OCI-LY7 (cell line): ENCODE measurements at regions of chr20 and their contacts with region 1.

Region 1: DNA sequence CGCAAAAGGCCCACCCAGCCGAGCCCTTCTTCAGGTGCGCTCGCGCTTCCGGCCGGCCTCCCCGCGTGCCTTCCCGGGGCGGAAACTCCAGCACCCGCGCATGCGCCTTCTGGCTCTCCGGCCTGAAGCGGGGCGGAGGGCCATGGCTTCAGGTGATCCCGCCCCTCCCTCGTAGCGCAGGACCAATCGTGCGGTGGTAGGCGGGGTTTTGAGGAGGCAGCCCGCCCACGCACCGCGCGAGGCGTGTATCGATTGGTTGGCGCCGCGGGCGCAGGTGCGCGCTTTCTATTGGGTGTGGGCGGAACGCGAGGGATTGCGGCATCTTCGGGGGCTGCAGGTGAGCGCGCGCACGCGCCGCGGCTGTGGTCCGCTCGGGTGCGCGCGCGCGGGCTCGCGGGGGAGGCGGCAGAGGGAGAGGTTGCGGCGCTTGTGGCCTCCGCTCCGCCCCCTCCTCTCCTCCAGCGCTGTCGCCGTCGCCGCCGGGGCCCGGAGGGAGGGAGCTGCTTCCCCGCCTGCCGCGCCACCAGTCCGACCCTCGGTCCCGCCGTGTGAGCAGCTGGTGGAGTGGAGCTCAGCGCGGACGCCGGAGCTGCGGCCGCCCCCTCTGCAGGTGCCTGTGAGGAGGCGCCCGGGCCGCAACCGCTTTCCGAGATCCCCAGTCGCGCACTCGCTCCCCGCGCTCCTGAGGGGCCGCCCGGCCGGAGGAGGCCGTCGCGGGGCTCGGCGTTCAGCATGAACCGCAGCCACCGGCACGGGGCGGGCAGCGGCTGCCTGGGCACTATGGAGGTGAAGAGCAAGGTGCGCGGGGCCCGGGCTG is at the start of gene PARD6B:
- DNase-seq: peak; percentile 100
- H3K4me3 ChIP-seq: peak within 1 kb of the TSS; percentile 75
- H3K27ac ChIP-seq: peak within 1 kb of the TSS; percentile 24
- H3K4me1 ChIP-seq: peaks cover 29% of the 10 kb centered on the region
- CTCF ChIP-seq: no peak
- total RNA-seq, gene PARD6B: 4.4 and 5.8 TPM in 2 replicates

Region 2: GRCh38 chr20:50929299-50930138 is 198.3 kb after region 1 on chr20:
- CTCF ChIA-PET with region 1: no interaction called
- POLR2A ChIA-PET with region 1: no interaction called
- intact Hi-C with region 1: loop called (anchors 2 kb)
- DNase-seq: peak; percentile 97
- H3K4me3 ChIP-seq: peak overlapping the region; percentile 93
- H3K27ac ChIP-seq: peak overlapping the region; percentile 89
- H3K4me1 ChIP-seq: peaks cover 59% of the 10 kb centered on the region
- CTCF ChIP-seq: peak; percentile 100